Right ventricle myocardium inferior (tissue), 1 donor: ENCODE measurements at regions of chr14 and their contacts with region 1.

Region 1: GRCh38 chr14:105086833-105087307 is 21.6 kb upstream of the GPR132 start:
- DNase-seq: peak; percentile 94
- ATAC-seq: peak; percentile 75

Region 2: DNA sequence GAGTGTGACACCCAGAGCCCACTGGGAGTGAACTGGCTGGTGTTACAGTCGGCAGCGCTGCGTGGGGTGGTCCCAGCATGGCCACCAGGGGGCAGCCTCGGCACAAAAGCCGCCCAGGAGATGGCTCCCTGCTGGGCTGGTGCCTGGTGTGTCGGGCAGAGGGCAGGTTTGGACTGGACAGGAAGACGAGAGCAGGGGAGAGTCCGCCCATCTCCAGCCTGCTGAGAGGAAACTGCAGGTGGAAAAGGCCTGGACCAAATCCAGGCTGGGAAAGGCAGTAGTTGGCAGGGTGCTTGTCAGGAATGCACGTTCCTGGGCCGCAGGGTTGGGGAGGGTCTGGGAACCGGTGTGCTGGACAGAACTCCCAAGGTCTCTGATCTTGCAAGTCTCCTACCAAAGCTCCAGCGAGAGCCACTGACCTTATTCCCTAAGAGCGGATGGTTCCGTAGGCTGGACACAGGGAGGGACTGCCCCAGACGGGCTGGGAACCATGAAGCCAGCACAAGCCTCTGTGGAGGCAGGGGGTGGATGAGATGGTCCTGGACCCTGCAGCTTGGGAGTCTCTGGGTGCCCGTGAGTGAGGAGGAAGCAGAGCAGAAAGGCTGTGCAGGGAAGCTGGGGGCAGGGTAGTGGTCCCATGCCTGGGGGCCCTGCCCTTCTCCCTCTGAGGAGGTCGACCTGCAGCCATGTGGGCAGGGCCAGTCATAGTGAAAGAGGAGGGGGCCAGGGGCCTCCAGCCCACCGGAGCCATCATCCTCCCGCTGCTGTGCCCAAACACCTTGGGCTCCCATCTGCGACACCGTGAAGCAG is 110.5 kb before region 1 on chr14:
- intact Hi-C with region 1: loop called (anchors 2 kb)
- DNase-seq: peak; percentile 93
- ATAC-seq: peak; percentile 74

Region 3: DNA sequence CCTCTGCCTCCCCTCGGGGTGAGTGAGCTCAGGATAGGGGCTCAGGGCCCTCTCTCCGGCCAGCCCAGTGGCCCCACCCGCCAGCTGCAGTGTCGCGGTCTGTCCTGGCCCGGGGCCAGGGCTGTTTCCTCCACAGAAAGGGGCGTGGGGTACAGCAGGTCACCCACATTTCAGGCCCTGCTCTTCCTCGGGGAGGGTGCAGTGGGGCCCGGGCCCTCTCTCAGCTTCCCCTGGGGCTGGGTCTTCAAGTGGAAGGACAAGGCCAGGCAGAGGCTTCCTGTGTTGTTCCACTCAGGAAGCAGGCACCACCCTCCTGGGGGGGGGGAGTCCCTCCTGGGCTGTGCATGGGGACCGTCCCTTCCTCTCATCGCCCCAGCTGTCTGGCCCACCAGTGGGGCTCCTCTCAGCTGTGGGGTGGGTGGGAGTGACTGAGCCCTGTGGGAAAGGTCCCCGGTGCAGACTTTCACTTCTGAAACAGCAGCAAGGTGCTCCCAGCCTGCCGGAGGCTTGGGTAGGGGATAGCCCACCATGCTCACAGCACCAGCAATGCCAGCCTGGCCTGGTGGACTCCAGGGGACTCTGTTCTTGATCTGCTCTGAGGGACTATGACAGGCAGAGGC is 25.3 kb before region 1 on chr14:
- intact Hi-C with region 1: loop called (anchors 2 kb)
- DNase-seq: peak; percentile 86
- ATAC-seq: peak; percentile 55

Region 4: DNA sequence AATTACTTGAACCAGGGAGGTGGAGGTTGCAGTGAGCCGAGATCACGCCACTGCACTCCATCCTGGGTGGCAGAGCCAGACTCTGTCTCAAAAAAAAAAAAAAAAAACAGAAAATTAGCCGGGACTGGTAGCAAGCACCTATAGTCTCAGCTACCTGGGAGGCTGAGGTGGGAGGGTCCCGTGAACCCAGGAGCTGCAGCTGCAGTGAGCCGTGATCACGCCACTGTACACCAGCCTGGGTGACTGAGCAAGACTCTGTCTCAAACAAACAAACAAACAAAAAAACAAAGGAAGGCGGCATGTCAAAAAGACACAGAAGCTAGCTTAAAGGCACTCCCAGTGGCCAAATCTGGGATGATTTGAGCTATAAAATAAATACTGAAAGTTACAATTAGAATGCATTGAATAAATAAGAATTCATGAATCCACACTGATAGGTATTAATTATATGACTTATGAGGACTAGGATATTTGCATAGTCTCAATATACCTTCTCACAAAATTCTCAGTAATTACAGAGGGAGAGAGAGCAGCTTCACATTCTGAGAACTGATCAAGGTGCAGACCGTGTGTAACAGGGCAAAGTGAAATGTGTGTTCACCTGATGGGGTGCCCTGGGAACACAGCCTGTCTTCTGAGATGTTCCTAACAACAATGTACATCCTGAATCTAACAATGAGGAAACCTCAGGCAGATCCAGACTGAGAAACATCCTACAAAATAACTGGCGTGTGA is 21.1 kb after region 1 on chr14:
- intact Hi-C with region 1: no loop called
- DNase-seq: no peak
- ATAC-seq: no peak

Region 5: DNA sequence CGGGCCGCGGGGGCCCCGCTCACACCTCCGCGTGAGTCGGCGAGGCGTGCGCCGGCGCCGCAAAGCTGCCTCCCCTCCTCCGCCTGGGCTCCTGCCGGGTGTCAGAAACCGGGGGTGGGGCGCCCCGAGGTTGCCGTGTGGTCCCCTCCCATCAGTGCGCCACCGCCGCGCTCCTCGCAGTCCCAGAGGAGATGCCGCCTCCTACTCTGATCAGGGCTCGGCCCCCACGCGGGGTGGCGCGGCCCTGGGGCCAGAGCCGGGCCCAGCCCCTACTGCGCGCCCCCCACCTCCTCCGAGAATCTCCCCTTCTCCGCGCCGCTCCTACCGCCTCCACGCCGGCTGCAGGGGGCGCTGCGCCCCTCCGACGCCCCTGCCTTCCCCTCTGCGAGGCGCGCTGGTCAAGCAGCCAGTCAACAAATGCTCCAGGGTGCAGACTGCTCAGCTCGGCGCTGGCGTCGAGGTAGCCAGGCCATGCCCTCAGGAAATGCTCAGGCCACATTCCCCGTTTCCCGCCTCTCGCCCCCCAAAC is 82.2 kb after region 1 on chr14:
- intact Hi-C with region 1: loop called (anchors 5 kb)
- DNase-seq: no peak
- ATAC-seq: peak; percentile 3

Region 6: DNA sequence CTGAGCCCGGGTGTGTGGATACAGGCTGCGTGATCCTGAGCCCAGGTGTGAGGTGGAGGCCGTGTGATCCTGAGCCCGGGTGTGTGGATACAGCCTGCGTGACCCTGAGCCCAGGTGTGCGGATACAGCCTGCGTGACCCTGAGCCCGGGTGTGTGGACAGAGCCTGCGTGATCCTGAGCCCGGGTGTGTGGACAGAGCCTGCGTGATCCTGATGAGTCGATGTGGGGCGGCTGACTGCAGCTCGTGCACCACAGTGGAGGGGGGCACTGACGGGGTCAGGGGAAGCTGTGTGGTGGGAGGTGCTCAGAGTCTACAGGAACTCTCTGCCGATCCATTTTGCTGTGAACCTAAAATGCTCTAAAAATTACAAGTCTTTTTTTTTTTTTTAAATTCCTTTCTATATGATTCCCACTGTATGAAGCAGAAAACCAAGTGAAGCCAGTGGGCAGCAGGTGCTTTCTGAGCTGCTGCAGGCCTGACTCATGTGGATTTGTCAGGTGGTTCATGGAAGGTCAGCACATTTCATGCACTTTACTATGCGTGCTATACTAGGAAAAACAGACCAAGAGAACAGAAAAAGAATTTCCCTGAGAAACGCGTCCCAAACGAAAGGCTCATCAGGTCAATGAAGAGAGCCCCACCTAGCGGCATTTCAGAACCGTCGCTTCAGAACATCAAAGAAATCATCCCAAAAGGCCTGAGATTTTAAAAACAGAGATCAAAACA is 194.7 kb after region 1 on chr14:
- intact Hi-C with region 1: loop called (anchors 2 kb)
- DNase-seq: peak; percentile 37
- ATAC-seq: no peak

Region 7: GRCh38 chr14:105351920-105352851 is 265.3 kb after region 1 on chr14:
- intact Hi-C with region 1: loop called (anchors 5 kb)
- DNase-seq: no peak
- ATAC-seq: peak; percentile 89